Testis (tissue), 5 donors: ENCODE measurements at regions of chr5 and their contacts with region 1.

Region 1: DNA sequence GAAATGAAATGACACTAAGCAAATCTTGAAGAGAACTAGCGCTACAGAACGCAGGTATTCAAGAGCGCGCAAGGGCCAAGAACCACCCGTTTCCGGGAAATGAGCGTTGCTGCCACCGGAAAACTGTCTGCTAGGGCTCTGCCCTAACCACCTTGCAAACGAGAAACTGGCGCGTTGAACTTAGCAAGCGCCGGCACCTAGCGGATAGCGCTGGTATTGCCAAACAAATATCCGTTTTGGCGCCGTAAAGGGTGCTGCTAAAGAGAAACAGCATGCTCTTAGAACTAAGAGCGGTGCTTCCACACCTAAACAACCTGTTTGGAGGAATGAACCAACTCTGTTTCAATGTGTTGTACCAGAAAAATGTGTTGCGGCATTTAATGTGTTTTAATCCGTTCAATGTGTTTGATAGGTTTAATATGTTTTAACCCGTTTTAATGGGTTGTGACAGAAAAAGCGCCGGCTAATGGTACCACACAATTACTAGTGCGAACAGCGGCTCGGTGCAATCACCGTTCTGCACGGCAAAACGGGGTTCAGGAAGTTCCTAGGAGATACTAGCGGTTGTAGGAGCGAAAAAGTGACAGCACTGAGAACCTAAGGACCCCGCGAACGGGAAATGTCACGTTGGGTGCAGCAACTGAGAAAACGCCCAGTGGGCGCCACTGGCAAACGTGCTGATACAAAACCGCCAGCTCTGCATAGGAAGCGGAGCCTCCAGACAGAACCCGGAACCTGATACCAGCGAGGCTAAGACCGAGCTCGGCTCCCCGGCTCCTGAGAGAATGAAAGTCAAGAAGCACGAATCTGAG is at the start of gene ANXA2R:
- DNase-seq: peak; percentile 92
- H3K4me3 ChIP-seq: peak within 1 kb of the TSS; percentile 63 to 70
- H3K27ac ChIP-seq: peak within 1 kb of the TSS; percentile 90 to 96
- H3K4me1 ChIP-seq: peaks cover 4% of the 10 kb centered on the region
- H3K27me3 ChIP-seq: no peaks in the 10 kb centered on the region
- CTCF ChIP-seq: peak; percentile 80 to 86 (median 82)
- POLR2A ChIP-seq: no peak
- total RNA-seq, gene ANXA2R: 5.1 to 10.2 TPM

Region 2: DNA sequence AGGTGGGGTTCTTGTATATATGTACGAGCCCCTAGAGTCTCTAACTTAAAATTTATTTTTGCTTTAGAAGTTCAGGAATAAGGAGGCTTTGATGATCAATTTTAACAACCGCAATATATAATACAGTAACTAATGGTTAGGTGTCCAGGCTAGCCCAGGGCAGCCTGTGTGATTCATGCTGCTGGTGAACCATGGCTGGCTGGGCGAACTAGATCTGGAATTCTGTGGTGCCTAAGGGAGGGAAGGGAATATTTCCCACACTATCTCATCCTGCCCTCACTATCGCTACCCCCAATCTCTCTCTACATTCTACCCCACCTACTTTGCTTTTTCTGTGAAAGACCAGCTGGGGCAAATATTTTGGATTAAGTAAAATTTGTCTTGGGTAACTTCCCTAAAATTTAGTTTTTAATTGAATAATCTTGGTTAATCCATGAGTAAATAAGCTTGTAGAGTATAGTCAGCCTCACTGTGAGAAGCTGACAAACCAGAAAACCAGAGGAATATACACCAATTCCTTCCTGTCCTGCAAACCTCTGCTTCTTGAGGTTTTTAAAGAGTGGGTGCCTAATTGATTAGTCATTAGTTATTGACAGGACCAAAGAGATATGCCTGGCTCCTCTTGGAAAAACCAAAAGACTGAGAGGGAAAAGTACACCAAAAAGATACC is 399.0 kb before region 1 on chr5:
- intact Hi-C with region 1: no loop called
- DNase-seq: no peak
- H3K4me3 ChIP-seq: no peak overlapping the region
- H3K27ac ChIP-seq: no peak overlapping the region
- H3K4me1 ChIP-seq: no peaks in the 10 kb centered on the region
- H3K27me3 ChIP-seq: no peaks in the 10 kb centered on the region
- CTCF ChIP-seq: no peak
- POLR2A ChIP-seq: no peak

Region 3: DNA sequence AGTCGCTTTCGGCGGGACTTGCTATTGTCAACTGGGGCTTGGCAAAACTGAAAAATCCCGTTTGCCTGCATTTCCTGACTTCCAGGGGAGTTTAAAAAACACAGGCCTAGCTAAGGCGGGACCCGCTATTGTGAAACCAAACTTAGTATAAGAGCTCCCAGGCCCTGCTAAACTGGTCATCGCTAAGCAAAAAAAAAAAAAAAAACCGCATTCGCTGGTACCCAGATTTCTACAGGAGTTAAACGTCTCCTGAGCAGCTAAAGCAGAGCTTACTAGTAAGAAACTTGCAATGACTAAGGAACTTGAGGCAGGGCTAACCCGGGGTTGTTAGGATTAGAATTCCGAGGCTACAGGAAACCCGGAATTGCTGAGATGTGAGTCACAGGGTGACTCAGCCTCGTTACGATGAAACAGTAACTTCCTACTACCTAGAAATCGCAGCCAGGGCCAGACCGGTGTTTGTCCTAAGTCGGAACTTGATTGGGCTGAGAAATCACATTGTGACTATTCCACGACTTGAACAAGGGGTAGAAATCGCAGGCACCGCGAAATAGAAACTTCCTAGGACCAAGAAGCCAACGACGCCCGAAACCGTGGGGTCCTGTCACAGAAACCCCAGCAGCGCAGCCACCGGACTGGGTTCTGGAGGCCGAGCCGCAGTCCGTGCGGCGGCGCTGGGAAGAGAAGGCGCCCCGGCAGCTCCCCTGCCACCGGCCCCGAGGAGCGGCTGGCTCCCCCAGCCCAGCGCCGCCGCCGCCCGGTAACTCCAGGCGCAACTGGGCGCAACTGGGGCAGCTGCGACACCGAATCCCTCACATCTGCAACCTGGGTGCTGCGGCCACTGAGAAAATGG is 89.8 kb before region 1 on chr5:
- intact Hi-C with region 1: loop called (anchors 5 kb)
- DNase-seq: peak; percentile 53
- H3K4me3 ChIP-seq: peak overlapping the region; percentile 40 to 44
- H3K27ac ChIP-seq: peak overlapping the region in 1 of 2 donors; percentile 75
- H3K4me1 ChIP-seq: no peaks in the 10 kb centered on the region
- H3K27me3 ChIP-seq: no peaks in the 10 kb centered on the region
- CTCF ChIP-seq: no peak
- POLR2A ChIP-seq: no peak

Region 4: DNA sequence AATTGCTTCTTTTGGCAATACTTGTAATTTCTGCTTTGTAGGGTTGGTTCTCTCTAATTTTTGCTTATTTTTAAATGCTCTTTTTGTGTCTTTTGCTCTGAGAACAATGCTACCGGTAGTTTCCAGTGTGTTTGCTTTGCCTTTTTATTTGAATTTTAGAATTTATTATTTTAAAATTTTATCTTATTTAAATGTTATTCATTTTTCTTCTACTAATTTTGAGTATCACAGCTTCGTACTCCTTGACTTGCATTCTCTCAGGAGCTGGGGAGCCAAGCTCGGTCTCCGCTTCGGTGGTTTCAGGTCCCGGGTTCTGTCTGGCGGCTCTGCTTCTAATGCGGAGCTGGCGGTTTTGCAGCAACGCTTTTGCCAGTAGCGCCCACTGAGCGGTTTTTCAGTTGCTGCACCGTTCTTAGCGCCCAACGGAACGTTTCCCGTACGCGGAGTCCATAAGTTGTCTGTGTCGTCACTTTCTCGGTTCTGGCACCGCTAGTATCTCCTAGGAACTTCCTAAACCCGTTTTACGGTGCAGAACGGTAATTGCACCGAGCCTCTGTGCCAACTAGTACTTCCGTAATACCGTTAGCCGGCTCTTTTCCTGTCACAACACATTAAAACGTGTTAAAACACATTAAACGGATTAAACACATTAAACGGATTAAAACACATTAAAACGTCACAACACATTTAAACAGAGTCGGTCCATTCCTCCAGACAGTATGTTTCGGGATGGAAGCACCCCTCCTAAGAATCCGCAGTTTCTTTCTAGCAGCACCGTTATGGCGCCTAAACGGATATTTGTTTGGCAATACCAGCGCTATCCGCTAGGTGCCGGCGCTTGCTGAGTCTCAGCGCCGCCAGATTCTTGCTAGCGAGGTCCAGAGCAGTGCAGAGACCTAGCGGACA is 46.0 kb before region 1 on chr5:
- intact Hi-C with region 1: loop called (anchors 5 kb)
- DNase-seq: peak; percentile 93
- H3K4me3 ChIP-seq: peak overlapping the region; percentile 50 to 63
- H3K27ac ChIP-seq: peak overlapping the region; percentile 23 to 85
- H3K4me1 ChIP-seq: no peaks in the 10 kb centered on the region
- H3K27me3 ChIP-seq: no peaks in the 10 kb centered on the region
- CTCF ChIP-seq: peak; percentile 74 to 84 (median 82)
- POLR2A ChIP-seq: no peak